Activated CD4-positive, alpha-beta T cell treated with anti-CD3 and anti-CD28 coated beads, Interleukin-2, amount 10 ng/mL, durations not matched to agents 24 days and 14 days (primary cell): ENCODE measurements at regions of chr16 and their contacts with region 1.

Region 1: GRCh38 chr16:11915644-11916523 is at the start of gene GSPT1:
- DNase-seq: peak; percentile 100
- H3K4me3 Mint-ChIP-seq: peak within 1 kb of the TSS; percentile 95
- H3K27ac Mint-ChIP-seq: peak within 1 kb of the TSS; percentile 97
- H3K4me1 Mint-ChIP-seq: peaks cover 33% of the 10 kb centered on the region
- H3K27me3 Mint-ChIP-seq: peaks cover 11% of the 10 kb centered on the region
- total RNA-seq, gene GSPT1: 212 and 224 TPM in 2 replicates

Region 2: DNA sequence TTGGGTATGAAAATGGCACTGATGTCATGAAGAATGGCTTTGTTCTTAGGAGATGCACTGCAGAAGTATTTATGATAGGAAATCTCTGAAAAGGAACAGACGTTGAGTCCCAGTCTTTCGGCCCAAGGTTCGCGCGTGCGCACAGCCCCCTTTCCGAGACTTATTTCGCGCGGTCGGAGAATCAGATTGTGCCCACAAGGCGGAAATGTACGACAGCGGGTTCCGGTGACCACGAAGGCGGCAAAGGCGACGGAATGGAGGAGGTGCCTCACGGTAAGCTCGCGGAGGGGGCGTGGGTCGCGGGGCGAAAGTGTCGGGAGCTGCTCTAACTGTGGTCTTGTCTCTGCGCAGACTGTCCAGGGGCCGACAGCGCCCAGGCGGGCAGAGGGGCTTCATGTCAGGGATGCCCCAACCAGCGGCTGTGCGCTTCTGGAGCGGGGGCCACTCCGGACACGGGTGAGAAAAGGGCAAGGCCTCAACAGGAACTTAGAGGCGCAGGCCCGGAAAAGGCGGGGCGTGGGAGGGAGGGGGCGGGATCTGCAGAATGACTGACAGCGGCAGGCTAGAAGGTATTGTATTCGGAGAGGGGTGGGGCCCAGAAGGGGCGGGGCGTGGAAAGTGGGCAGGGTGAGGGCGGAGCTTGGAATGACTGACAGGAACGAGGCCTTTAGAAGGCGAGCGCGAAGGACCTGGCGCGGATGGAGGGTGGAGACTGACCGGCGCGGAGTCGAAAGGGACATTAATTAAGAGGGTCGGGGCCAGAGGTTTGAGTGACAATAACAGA is 1172.1 kb before region 1 on chr16 and contains the start of gene NUBP1:
- intact Hi-C with region 1: loop called (anchors 10 kb)
- DNase-seq: peak; percentile 100
- H3K4me3 Mint-ChIP-seq: peak within 1 kb of the TSS; percentile 85
- H3K27ac Mint-ChIP-seq: peak within 1 kb of the TSS; percentile 98
- H3K4me1 Mint-ChIP-seq: peaks cover 45% of the 10 kb centered on the region
- H3K27me3 Mint-ChIP-seq: peaks cover 2% of the 10 kb centered on the region
- total RNA-seq, gene NUBP1: 38.6 and 39.5 TPM in 2 replicates

Region 3: DNA sequence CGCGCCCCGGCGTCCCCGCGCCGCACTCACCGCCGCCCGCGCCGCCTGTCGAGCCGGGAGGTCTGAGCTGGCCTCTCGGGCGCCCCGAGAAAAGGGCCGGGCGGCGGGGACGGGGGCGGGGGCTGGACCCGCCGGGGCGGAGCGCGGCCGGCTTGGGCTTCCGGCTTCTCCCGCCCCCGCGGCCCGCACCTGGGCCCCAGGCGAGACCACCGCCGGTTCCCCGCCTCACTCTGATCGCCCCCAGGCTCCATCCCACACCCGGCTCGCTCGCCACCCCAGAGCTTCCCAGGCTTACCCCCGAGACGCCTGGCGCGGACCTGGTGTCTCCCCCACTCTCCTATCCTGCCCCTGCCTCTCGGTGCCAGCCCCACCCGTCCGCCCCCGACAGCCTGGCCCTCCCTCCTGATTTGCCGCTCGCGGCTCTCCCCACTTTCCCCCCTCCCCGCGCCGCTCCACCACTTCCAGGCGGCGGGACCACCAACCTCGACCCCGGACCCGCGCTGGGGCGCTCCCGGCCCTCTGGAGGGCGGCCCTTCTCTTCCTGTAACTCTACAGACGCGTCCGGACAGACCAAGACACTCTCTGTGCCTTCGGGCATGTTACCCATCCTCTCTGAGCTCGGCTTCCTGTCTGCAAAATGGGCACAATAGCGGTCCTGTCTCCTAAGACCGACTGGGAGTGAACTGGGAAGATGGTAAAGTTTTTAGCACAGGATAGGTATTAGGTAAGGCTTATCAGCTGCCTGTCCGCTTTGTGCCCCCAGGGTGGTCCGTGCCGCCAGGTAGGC is 328.8 kb before region 1 on chr16 and contains the start of gene LITAF:
- intact Hi-C with region 1: loop called (anchors 10 kb)
- DNase-seq: peak; percentile 87
- H3K4me3 Mint-ChIP-seq: peak within 1 kb of the TSS; percentile 90
- H3K27ac Mint-ChIP-seq: peak within 1 kb of the TSS; percentile 89
- H3K4me1 Mint-ChIP-seq: peaks cover 38% of the 10 kb centered on the region
- H3K27me3 Mint-ChIP-seq: peaks cover 3% of the 10 kb centered on the region
- total RNA-seq, gene LITAF: 163 and 170 TPM in 2 replicates

Region 4: DNA sequence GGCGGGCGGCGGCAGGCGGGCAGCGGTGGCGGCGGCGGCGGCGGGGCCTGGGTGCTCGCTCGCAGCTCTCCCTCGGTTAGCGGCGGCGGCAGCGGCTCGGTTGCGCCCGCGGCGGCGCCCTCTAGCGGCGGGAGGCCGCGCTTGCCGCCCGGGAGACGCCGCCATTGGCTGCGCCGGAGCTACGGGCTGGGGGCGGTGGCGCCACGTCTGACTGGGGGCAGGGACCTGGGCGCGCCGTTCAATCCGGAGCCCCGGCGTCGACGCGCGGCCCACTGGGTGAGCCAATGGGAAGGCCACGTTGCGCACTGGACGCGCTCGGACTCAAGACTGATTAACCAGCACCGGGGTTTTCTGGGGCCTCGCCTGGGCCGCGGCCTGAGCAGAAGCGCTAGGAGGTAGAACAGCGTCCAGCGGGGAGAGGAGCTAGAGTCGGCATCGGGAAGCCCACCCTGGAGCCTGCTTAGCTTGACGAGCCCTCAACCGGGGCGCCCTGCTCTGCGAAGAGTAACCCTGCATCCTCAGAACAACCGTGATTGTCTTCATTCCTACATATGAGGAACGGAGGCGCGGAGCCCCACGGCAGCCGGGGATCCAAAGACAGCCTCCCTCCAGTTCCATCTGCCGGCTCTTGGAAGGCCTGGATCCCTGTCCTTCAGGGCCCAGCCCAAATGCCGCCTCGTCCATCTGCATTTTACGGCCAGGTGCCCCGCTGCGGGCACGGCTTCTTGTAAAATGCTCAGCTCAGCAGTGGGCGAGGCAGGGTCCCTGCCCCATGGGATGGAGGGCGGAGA is 118.5 kb before region 1 on chr16 and contains the start of gene ZC3H7A:
- intact Hi-C with region 1: loop called (anchors 1 kb)
- DNase-seq: peak; percentile 98
- H3K4me3 Mint-ChIP-seq: peak within 1 kb of the TSS; percentile 93
- H3K27ac Mint-ChIP-seq: peak within 1 kb of the TSS; percentile 95
- H3K4me1 Mint-ChIP-seq: peaks cover 69% of the 10 kb centered on the region
- H3K27me3 Mint-ChIP-seq: no peaks in the 10 kb centered on the region
- total RNA-seq, gene ZC3H7A: 58.3 and 64.1 TPM in 2 replicates

Region 5: DNA sequence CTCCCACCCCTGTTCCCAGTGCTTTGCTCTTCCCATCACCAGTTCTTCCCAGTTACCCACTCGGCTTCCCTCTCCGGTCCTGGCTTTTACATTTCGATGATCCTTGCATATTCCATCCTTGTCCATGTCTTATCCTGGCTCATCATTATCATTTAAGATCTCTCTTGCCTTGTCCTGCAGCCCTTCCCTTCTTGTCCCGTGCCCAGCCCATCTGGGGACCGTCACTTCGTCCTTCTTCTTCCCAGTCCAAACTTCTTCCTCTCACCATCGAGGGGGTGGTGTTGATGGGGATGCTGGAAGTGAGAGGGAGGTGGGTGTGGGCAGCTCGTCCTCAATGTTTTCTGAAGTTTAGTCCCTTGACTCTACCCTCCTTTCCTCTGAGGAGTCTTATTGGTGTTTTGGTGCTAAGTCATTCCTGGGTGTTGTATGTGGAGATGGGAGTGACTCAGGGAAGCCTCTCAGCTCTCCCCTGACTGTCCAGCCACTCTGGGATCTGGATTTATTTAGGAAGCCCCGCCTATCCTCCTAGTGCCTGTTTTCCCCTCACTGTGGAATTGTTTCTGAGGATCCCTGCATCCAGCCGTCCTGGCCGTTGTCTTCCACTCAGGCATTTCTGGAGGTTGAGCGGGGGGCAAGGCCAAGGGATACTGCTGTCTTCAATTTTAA is 61.6 kb after region 1 on chr16:
- intact Hi-C with region 1: loop called (anchors 1 kb)
- DNase-seq: peak; percentile 56
- H3K4me3 Mint-ChIP-seq: peak overlapping the region; percentile 98
- H3K27ac Mint-ChIP-seq: peak overlapping the region; percentile 57
- H3K4me1 Mint-ChIP-seq: peaks cover 30% of the 10 kb centered on the region
- H3K27me3 Mint-ChIP-seq: no peaks in the 10 kb centered on the region